ENCODE measurements at regions of chr2 and their contacts with region 1.

Region 1: GRCh38 chr2:106172649-106173048 is 21.5 kb downstream of the UXS1 start:
- DNase-seq: no peak
- ATAC-seq: no peak
- H3K4me3 ChIP-seq: no peak overlapping the region
- H3K27ac ChIP-seq: no peak overlapping the region
- H3K4me1 ChIP-seq: no peaks in the 10 kb centered on the region; the same call in 1 of the 2 replicates
- H3K27me3 ChIP-seq: no peaks in the 10 kb centered on the region
- CTCF ChIP-seq: no peak
- POLR2A ChIP-seq: no peak
- RAD21 ChIP-seq: no peak

Region 2: GRCh38 chr2:106143495-106144215 is 29.0 kb before region 1 on chr2:
- CTCF ChIA-PET with region 1: no interaction called
- POLR2A ChIA-PET with region 1: no interaction called
- dilution Hi-C with region 1: no loop called
- in situ Hi-C with region 1: no loop called
- intact Hi-C with region 1: loop called (anchors 1 kb)
- DNase-seq: no peak
- ATAC-seq: no peak
- H3K4me3 ChIP-seq: no peak overlapping the region
- H3K27ac ChIP-seq: no peak overlapping the region
- H3K4me1 ChIP-seq: peaks cover 18% of the 10 kb centered on the region
- H3K27me3 ChIP-seq: no peaks in the 10 kb centered on the region
- CTCF ChIP-seq: no peak
- POLR2A ChIP-seq: no peak
- RAD21 ChIP-seq: no peak